GM13977 (cell line): ENCODE measurements at regions of chr6 and their contacts with region 1.

Region 1: GRCh38 chr6:16420715-16421461 is 182.5 kb downstream of the GMPR start:
- DNase-seq: peak; percentile 68
- CTCF ChIP-seq: no peak

Region 2: GRCh38 chr6:15839969-15840541 is 580.8 kb before region 1 on chr6:
- in situ Hi-C with region 1: no loop called
- DNase-seq: no peak
- CTCF ChIP-seq: no peak

Region 3: GRCh38 chr6:15977050-15977449 is 443.8 kb before region 1 on chr6:
- in situ Hi-C with region 1: no loop called
- DNase-seq: no peak
- CTCF ChIP-seq: no peak

Region 4: DNA sequence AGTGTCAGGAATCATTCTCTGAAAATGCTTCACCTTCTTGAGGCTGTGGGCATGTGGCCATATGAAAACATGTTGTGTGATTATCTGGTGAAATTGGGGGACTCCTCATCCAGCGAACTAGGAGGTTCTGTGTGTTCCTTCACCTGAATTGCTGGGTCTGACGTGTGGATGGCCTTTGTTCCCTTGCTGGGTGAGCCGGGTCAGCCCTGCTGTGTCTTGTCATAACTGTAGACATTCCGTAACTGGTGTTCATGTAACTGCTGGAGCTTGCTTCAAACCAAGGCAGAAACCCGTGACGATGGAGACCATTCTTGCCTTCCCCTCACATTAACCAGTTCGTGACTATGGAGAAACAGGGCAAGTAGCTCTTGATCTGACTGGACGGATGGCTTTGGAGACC is 59.0 kb before region 1 on chr6:
- in situ Hi-C with region 1: no loop called
- DNase-seq: no peak
- CTCF ChIP-seq: no peak

Region 5: DNA sequence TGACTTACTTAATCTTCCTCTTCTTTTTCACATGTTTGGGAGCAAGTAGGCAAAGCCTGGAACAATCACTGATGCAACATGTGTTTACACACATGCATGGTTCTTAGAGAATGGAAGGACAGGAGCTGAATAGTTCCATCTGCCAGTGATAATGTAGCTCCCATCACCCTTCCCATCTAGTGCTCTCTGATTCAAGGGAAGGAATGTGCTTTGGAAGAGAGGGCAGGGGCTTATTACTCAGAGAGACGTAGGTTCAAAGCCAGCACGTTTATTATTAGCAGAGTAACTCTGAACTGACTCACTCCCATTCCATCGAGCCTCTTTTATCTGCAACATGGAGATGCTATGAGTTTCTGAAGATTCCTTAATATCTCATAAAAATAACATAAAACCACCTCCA is 29.4 kb after region 1 on chr6:
- in situ Hi-C with region 1: loop called (anchors 5 kb)
- DNase-seq: no peak
- CTCF ChIP-seq: no peak

Region 6: GRCh38 chr6:16503970-16504415 is 83.1 kb after region 1 on chr6:
- in situ Hi-C with region 1: no loop called
- DNase-seq: no peak
- CTCF ChIP-seq: no peak